ENCODE measurements at regions of chr11 and their contacts with region 1.

Region 1: GRCh38 chr11:122853971-122854446 is 15.7 kb downstream of the CRTAM start:
- DNase-seq: no peak
- ATAC-seq: no peak
- H3K4me3 Mint-ChIP-seq: no peak overlapping the region
- H3K27ac Mint-ChIP-seq: no peak overlapping the region
- H3K4me1 Mint-ChIP-seq: peaks cover 35% of the 10 kb centered on the region
- H3K27me3 Mint-ChIP-seq: no peaks in the 10 kb centered on the region
- CTCF ChIP-seq: peak; percentile 51

Region 2: GRCh38 chr11:122578168-122578825 is 275.7 kb before region 1 on chr11:
- CTCF ChIA-PET with region 1: interaction called, 14 read pairs
- POLR2A ChIA-PET with region 1: interaction called, 3 read pairs
- intact Hi-C with region 1: loop called (anchors 1 kb)
- DNase-seq: no peak
- ATAC-seq: no peak
- H3K4me3 Mint-ChIP-seq: no peak overlapping the region
- H3K27ac Mint-ChIP-seq: no peak overlapping the region
- H3K4me1 Mint-ChIP-seq: peaks cover 10% of the 10 kb centered on the region
- H3K27me3 Mint-ChIP-seq: peaks cover 4% of the 10 kb centered on the region
- CTCF ChIP-seq: no peak

Region 3: GRCh38 chr11:122781378-122782195 is 72.4 kb before region 1 on chr11:
- CTCF ChIA-PET with region 1: interaction called, 12 read pairs
- POLR2A ChIA-PET with region 1: no interaction called
- intact Hi-C with region 1: no loop called
- DNase-seq: peak; percentile 64
- ATAC-seq: peak; percentile 95
- H3K4me3 Mint-ChIP-seq: no peak overlapping the region
- H3K27ac Mint-ChIP-seq: no peak overlapping the region
- H3K4me1 Mint-ChIP-seq: no peaks in the 10 kb centered on the region
- H3K27me3 Mint-ChIP-seq: no peaks in the 10 kb centered on the region
- CTCF ChIP-seq: peak; percentile 85

Region 4: DNA sequence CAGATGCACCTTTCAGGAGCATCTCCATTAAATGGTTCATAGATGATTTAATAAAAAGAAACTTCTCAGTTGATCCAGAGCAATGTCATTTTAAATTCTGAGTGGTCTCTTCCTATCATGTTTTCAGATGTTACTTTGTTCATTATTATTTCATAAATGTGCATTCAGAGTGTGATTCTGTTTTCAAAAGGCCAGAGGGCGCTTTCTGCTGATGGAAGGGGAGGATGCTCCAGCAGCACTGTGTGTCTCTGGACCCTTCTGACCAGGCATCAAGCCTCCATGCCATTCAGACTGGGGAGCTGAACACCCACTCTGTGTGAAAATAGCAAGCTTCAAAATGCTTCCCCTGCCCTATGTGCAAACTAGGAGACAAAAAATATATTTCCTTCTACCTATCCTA is 39.6 kb before region 1 on chr11:
- CTCF ChIA-PET with region 1: interaction called, 6 read pairs
- POLR2A ChIA-PET with region 1: no interaction called
- intact Hi-C with region 1: loop called (anchors 1 kb)
- DNase-seq: no peak
- ATAC-seq: no peak
- H3K4me3 Mint-ChIP-seq: no peak overlapping the region
- H3K27ac Mint-ChIP-seq: no peak overlapping the region
- H3K4me1 Mint-ChIP-seq: peaks cover 30% of the 10 kb centered on the region
- H3K27me3 Mint-ChIP-seq: no peaks in the 10 kb centered on the region
- CTCF ChIP-seq: no peak

Region 5: DNA sequence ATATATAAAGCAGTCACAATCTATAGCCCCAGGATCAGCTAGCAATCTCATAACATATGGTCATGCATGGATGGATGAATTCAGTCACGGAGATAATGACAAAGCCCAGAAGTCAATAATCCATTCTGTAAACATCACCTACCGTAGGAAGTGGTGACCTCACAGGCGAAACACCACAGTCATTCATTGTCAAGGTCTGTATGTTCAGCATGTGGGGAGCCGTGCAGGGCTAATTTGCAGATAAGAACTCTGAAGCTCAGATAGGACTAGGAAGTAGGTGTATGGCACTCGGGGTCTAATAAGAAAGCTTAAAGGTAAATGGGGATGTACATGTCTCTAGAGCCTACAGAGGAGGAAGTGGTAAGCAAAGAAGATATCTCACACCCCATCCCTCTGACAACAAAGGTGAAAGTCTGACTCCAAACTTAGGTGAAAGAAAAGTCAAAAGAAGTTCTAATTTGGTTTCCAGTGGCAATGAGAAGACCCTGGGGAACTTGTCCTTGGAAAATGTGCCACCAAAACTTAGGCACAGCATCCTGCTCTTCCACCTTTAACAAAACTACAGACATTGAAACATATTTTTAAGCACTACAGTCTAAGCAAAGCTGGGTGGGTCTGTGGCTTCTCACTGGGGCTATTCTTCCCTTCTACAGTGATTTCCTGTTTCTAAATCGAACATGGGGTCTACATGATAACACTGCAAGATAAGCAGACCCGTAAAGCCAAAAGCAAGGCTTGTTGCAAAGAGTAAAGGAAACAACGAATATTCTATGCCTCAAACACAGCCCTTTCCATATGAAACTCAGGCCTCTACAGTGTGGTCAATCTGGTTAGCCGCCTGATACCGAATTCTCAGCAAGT is 10.5 kb before region 1 on chr11:
- CTCF ChIA-PET with region 1: interaction called, 18 read pairs
- POLR2A ChIA-PET with region 1: interaction called, 5 read pairs
- intact Hi-C with region 1: no loop called
- DNase-seq: no peak
- ATAC-seq: peak; percentile 89
- H3K4me3 Mint-ChIP-seq: peak overlapping the region; percentile 33
- H3K27ac Mint-ChIP-seq: peak overlapping the region; percentile 67
- H3K4me1 Mint-ChIP-seq: peaks cover 36% of the 10 kb centered on the region
- H3K27me3 Mint-ChIP-seq: no peaks in the 10 kb centered on the region
- CTCF ChIP-seq: no peak

Region 6: DNA sequence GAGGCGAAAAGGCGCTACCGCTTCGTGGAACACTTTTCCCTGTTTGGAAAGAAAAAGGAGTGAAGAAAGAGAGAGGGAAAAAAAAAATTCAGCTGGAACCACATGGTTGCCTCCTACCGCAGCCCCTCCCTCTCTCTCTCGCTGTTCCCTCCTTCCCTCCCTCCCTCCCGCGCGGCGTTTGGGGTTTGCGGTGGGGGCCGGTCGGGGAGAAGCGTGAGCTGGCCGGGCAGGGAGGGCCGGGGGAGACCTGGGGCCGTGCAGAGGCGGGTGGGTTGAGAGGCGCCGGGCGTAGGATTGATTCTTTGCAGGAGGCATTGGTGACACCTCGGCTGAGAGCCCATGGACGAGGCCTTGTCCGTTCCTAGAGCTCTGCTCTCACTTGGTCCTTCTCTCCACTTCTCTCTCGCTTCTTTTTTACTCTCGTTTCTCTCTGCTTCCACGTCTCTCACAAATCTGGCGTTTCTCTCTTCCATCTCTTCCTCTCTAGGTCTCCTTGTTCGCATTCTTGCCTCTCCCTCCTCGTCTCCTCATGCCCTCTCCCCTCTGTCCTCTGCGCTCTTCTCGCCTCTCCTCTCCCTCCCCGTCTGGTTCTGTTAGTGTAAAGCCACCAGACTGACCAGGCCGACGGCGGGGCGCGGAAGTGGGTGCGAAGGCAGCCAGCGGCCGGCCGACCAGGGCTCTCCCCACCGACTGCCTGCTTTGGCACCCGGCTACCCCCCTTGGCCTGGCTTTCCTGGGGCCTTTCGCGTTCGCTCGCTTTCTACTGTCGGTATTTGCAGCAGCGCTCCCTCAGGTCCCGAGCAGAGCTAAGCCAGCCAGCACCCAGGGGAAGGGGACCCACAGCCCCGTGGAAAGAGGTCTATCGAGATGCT is 341.4 kb after region 1 on chr11 and contains the start of gene CLMP:
- CTCF ChIA-PET with region 1: no interaction called
- POLR2A ChIA-PET with region 1: no interaction called
- intact Hi-C with region 1: no loop called
- DNase-seq: no peak
- ATAC-seq: no peak
- H3K4me3 Mint-ChIP-seq: peak within 1 kb of the TSS; percentile 1
- H3K27ac Mint-ChIP-seq: no peak within 1 kb of the TSS
- H3K4me1 Mint-ChIP-seq: peaks cover 6% of the 10 kb centered on the region
- H3K27me3 Mint-ChIP-seq: peaks cover 56% of the 10 kb centered on the region
- CTCF ChIP-seq: no peak
- total RNA-seq, gene CLMP: not detected in 2 replicates